CD8-positive, alpha-beta T cell (primary cell): ENCODE measurements at regions of chr2 and their contacts with region 1.

Region 1: DNA sequence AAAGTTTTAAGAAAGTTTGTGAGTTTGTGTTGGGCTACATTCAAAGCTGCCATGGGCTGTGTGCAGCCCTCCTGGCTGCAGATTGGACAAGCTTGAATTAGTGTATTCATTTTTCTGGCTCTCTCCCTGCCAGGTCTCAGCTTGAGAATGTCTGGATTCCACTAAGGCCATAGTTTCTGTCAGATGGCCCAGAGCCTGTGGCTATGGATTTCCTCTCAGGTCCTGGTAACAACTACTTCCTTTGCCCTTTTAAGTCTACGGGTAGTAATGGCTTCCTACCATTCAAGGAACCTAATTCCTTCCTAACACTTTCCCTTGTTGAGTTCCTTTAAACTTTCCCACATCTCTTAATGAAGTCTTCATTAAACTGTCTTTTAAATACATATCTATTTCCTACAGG is 24.3 kb upstream of the PSMD14 start:
- DNase-seq: no peak
- ATAC-seq: no peak
- H3K4me3 ChIP-seq: no peak overlapping the region
- H3K4me3 Mint-ChIP-seq: no peak overlapping the region
- H3K27ac ChIP-seq: no peak overlapping the region
- H3K27ac Mint-ChIP-seq: no peak overlapping the region
- H3K4me1 ChIP-seq: no peaks in the 10 kb centered on the region
- H3K4me1 Mint-ChIP-seq: no peaks in the 10 kb centered on the region
- H3K27me3 ChIP-seq: peaks cover 3 to 4% of the 10 kb centered on the region in 2 experiments
- H3K27me3 Mint-ChIP-seq: peaks cover 21% of the 10 kb centered on the region
- CTCF ChIP-seq: no peak

Region 2: DNA sequence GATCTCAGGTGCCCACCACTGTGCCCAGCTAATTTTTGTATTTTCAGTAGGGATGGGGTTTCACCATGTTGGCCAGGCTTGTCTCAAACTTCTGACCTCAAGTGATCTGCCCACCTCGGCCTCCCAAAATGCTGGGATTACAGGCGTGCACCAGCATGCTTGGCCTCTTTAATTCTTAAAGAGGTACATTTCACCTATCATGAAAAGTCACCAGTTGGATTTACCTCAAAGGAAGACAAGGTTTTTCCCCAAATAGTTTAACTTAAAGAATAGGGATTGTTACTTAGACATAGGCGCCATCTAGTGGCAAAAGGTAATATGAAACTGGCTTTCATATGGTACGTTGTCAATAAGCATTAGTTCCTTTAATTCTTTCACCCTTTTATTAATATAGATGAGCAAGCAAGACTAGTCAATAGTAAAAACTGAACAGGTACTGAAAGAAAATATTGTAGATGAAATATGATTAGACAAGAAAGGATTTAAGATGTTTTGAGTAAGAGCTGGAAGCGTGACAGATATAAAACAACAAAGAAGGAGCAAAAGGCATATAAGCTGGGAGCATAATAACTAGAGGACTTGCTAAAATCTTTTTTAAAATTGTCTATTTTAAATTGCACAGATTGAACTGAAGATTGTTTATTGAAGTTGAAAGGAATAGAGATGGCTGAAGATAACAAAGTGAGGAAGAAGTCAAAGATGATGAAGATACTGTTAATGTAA is 10.7 kb before region 1 on chr2:
- CTCF ChIA-PET with region 1: interaction called, 11 read pairs
- POLR2A ChIA-PET with region 1: no interaction called
- intact Hi-C with region 1: no loop called
- DNase-seq: peak in 3 of 9 experiments; percentile 51 to 77 (median 72)
- ATAC-seq: peak; percentile 69
- H3K4me3 ChIP-seq: no peak overlapping the region
- H3K4me3 Mint-ChIP-seq: no peak overlapping the region
- H3K27ac ChIP-seq: no peak overlapping the region
- H3K27ac Mint-ChIP-seq: no peak overlapping the region
- H3K4me1 ChIP-seq: no peaks in the 10 kb centered on the region
- H3K4me1 Mint-ChIP-seq: no peaks in the 10 kb centered on the region
- H3K27me3 ChIP-seq: peaks cover 0 to 2% of the 10 kb centered on the region in 2 experiments
- H3K27me3 Mint-ChIP-seq: peaks cover 7% of the 10 kb centered on the region
- CTCF ChIP-seq: peak; percentile 90

Region 3: DNA sequence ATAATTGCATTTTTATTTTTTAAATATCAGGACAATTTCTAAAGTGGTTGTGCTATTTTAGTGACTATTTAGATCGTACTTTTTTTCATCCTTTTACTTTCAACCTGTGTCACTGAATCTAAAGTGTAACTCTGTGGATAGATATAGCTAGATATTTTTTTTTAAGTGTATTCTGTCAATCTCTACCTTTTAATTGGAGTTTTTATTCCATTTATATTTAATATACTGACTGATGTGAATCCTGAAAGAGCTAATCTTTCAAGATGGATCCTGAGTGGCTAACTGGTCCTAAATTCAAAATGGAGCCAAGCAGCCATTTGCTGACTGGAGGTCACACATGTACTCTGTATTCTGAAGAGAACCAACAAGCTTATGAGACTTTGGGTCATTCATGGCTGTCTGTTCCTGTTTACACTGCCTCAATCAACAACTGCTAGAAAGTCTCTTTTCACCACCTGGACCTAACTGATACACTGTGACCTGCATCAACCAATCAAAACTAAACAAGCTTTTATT is 19.7 kb after region 1 on chr2:
- CTCF ChIA-PET with region 1: no interaction called
- POLR2A ChIA-PET with region 1: no interaction called
- intact Hi-C with region 1: no loop called
- DNase-seq: no peak
- ATAC-seq: no peak
- H3K4me3 ChIP-seq: no peak overlapping the region
- H3K4me3 Mint-ChIP-seq: no peak overlapping the region
- H3K27ac ChIP-seq: no peak overlapping the region
- H3K27ac Mint-ChIP-seq: no peak overlapping the region
- H3K4me1 ChIP-seq: peaks cover 5% of the 10 kb centered on the region
- H3K4me1 Mint-ChIP-seq: peaks cover 12% of the 10 kb centered on the region
- H3K27me3 ChIP-seq: peaks cover 0 to 3% of the 10 kb centered on the region in 2 experiments
- H3K27me3 Mint-ChIP-seq: peaks cover 10% of the 10 kb centered on the region
- CTCF ChIP-seq: no peak